Right ventricle myocardium inferior (tissue), 1 donor: ENCODE measurements at regions of chr7 and their contacts with region 1.

Region 1: DNA sequence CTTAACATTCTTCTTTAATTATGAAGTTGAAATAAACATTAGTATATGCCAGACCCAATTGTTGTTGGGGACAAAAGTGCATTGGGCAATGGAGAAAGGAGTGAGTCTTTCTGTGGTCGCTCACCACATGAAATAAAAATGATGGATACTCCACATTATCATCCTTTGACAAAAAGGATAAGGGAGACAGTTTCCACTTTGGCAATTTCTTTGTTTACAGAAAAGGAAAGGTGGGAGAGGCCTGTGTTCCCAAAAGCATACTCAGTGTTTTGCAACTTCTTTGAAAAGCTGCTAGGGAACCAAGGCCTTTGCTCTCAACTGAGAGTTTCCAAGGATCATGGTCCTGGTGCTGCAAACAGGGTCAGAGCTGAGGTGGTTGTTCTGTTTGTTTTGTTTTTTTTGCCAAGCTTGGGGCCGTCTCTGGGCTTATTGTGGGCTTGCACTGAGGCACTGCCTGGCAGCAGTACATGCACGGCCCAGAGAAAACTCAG is 341.9 kb downstream of the TNS3 start:
- DNase-seq: no peak
- ATAC-seq: no peak

Region 2: DNA sequence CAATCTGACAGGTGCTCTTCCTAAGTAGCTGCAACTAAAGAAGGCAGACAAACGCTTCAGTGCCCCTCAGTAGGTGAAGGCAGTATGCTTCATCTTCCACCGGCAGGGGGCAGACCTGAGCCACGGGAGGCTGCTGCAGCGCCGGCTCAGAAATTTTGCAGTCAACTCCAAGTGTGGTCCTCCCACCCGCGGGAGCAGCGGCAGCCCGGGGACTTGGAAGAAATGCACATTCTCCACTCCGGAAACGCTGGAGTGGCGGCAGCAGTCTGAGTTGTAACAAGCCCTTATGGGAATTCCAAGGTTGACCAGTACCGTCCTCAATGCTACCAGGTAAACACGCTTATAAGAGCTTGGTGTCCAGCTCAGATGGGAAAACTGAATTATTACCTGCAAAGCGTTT is 1322.3 kb before region 1 on chr7:
- intact Hi-C with region 1: loop called (anchors 5 kb)
- DNase-seq: peak; percentile 88
- ATAC-seq: peak; percentile 18

Region 3: GRCh38 chr7:47031786-47032535 is 208.0 kb before region 1 on chr7:
- intact Hi-C with region 1: no loop called
- DNase-seq: no peak
- ATAC-seq: peak; percentile 57